Common myeloid progenitor, CD34-positive (primary cell): ENCODE measurements at regions of chr6 and their contacts with region 1.

Region 1: GRCh38 chr6:134938896-134939295 is 11.0 kb downstream of the ALDH8A1 start:
- DNase-seq: peak in 2 of 3 donors; percentile 52 to 57
- H3K4me3 ChIP-seq: no peak overlapping the region
- H3K27ac ChIP-seq: no peak overlapping the region
- H3K4me1 ChIP-seq: peaks cover 0 to 4% (median 0%) of the 10 kb centered on the region in 4 experiments
- H3K27me3 ChIP-seq: no peaks in the 10 kb centered on the region

Region 2: DNA sequence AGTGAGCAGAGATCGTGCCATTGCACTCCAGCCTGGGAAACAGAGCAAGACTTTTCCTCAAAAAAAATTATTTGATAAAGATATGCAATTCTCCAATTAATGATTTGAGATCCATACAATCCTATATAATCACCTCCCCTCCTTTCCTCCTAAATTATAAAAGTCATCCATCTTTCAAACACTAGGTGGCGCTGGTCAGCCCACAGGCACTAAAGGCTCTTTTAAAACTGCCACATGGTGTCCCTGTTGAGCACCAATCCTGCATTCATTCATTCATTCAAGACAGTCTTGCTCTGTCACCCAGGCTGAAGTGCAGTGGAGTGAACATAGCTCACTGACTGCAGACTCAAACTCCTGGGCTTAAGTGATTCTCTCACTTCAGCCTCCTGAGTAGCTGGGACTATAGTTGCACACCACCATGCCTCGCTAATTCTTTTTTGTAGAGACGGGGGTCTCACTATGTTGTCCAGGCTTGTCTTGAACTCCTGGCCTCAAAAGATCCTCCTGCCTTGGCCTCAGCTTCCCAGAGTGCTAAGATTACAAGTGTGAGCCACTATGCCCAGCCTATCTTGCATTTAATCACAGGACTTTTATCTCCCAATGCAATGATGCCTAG is 827.7 kb before region 1 on chr6:
- CTCF ChIA-PET with region 1: interaction called, 17 read pairs
- POLR2A ChIA-PET with region 1: no interaction called
- DNase-seq: peak; percentile 74 to 87 (median 85)
- H3K4me3 ChIP-seq: no peak overlapping the region
- H3K27ac ChIP-seq: no peak overlapping the region
- H3K4me1 ChIP-seq: peaks cover 0 to 2% (median 0%) of the 10 kb centered on the region in 4 experiments
- H3K27me3 ChIP-seq: peaks cover 0 to 14% (median 9%) of the 10 kb centered on the region in 5 experiments

Region 3: GRCh38 chr6:134123666-134124208 is 815.2 kb before region 1 on chr6:
- CTCF ChIA-PET with region 1: interaction called, 11 read pairs
- POLR2A ChIA-PET with region 1: no interaction called
- DNase-seq: peak; percentile 74 to 82 (median 80)
- H3K4me3 ChIP-seq: no peak overlapping the region
- H3K27ac ChIP-seq: no peak overlapping the region
- H3K4me1 ChIP-seq: no peaks in the 10 kb centered on the region
- H3K27me3 ChIP-seq: no peaks in the 10 kb centered on the region

Region 4: GRCh38 chr6:134161036-134161435 is 777.9 kb before region 1 on chr6:
- CTCF ChIA-PET with region 1: interaction called, 44 read pairs
- POLR2A ChIA-PET with region 1: no interaction called
- DNase-seq: no peak
- H3K4me3 ChIP-seq: no peak overlapping the region
- H3K27ac ChIP-seq: no peak overlapping the region
- H3K4me1 ChIP-seq: no peaks in the 10 kb centered on the region
- H3K27me3 ChIP-seq: no peaks in the 10 kb centered on the region

Region 5: DNA sequence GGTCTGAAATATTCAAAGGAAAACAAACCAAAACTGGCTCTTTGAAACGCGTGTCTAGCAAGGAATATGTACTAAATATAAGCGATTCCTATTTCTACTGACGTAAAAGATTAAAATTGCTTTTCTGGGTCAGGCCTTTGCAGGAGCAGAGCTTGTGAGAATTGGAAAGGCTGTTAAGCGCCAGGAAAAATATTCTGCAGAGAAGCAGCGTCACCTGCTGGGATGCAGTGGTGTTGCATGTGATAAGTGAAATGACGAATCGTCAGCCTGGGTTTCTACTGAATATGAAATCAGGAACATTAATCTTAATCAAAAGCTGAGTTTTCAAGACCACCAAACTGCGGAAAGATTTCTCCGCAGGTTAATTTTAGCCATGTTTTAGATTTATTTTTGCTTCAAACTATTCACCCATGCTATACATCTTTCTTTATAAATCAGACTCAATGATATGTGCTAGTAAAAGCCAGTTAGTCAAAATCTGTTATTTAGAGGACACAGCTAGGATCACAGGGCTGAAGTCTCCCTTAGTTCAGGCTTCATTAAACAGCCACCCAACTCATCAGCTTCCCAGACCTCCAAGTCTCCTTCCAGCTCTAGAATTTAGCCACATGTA is 56.4 kb before region 1 on chr6:
- CTCF ChIA-PET with region 1: no interaction called
- POLR2A ChIA-PET with region 1: no interaction called
- DNase-seq: peak; percentile 29 to 80 (median 78)
- H3K4me3 ChIP-seq: no peak overlapping the region
- H3K27ac ChIP-seq: no peak overlapping the region
- H3K4me1 ChIP-seq: peaks cover 0 to 12% (median 3%) of the 10 kb centered on the region in 4 experiments
- H3K27me3 ChIP-seq: no peaks in the 10 kb centered on the region